Naive thymus-derived CD8-positive, alpha-beta T cell (primary cell): ENCODE measurements at regions of chr10 and their contacts with region 1.

Region 1: GRCh38 chr10:69318106-69318866 is 40.0 kb downstream of the HK1 start:
- DNase-seq: peak; percentile 88 to 94 (median 91)
- ATAC-seq: peak; percentile 87 to 88
- H3K4me3 Mint-ChIP-seq: peak overlapping the region; percentile 93 to 98 (median 96)
- H3K27ac Mint-ChIP-seq: peak overlapping the region; percentile 71 to 95 (median 90)
- H3K4me1 Mint-ChIP-seq: peaks cover 17 to 44% (median 40%) of the 10 kb centered on the region in 4 donors
- H3K27me3 Mint-ChIP-seq: no peaks in the 10 kb centered on the region

Region 2: DNA sequence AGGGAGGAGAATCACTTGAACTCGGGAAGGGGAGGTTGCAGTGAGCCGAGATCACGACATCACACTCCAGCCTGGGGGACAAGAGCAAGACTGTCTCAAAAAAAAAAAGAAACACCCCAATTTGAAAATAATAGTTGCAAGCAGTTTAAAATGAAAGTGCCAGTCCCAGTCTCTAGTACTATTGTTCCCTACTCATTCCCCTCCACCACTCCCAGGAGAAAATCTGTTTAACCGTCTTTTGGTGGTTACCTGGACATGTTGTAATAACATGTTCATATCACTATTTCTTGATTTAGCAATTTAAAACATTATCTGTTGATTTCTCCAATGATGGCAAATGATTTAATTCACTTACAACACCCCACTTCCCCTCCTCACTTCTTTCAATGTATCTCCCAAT is 285.0 kb before region 1 on chr10:
- POLR2A ChIA-PET with region 1: no interaction called
- DNase-seq: no peak
- ATAC-seq: no peak
- H3K4me3 Mint-ChIP-seq: no peak overlapping the region
- H3K27ac Mint-ChIP-seq: no peak overlapping the region
- H3K4me1 Mint-ChIP-seq: no peaks in the 10 kb centered on the region
- H3K27me3 Mint-ChIP-seq: no peaks in the 10 kb centered on the region

Region 3: GRCh38 chr10:69337296-69338132 is 19.2 kb after region 1 on chr10:
- POLR2A ChIA-PET with region 1: interaction called, 17 read pairs
- DNase-seq: no peak
- ATAC-seq: no peak
- H3K4me3 Mint-ChIP-seq: peak overlapping the region in 4 of 10 donors; percentile 4 to 56 (median 14)
- H3K27ac Mint-ChIP-seq: peak overlapping the region in 7 of 10 donors; percentile 15 to 95 (median 29)
- H3K4me1 Mint-ChIP-seq: peaks cover 39 to 85% (median 75%) of the 10 kb centered on the region in 4 donors
- H3K27me3 Mint-ChIP-seq: no peaks in the 10 kb centered on the region

Region 4: DNA sequence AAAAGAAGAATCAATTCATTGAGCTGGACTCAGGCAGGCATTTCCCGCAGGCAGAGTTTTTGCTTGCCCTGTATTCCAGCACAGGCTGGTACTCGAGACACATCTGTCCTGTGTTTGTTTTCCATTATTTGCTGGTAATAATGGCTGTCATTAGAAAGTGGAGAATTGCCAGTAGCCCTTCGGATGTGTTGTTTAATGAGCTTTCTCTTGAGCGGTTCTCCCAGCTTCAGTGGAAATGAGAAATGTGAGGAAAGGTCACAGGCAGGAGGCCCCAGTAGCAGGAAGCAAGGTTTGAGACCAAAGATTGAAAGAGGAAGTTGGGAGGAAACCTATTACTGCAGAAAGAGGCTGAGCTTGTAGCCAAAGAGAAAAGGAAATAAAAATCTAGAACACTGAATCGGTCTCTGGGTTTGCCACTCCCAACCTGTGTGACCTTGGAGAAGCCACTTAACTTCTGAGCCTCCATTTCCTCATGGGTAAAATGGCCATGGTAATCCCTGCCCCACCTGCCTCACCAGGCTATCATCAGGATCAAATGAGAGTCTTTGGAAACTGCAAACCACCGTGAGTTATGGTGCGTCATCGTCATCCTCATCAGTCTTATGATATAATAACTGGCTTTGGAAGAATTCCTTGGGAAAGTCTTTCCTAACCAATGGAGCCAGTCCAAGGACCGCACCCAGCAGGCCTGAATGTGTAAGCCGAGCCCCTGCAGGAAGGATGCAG is 30.7 kb after region 1 on chr10:
- POLR2A ChIA-PET with region 1: interaction called, 37 read pairs
- DNase-seq: peak in 1 of 10 donors; percentile 28
- ATAC-seq: no peak
- H3K4me3 Mint-ChIP-seq: peak overlapping the region; percentile 58 to 83 (median 79)
- H3K27ac Mint-ChIP-seq: peak overlapping the region; percentile 76 to 96 (median 95)
- H3K4me1 Mint-ChIP-seq: peaks cover 36 to 87% (median 80%) of the 10 kb centered on the region in 4 donors
- H3K27me3 Mint-ChIP-seq: no peaks in the 10 kb centered on the region

Region 5: GRCh38 chr10:69360485-69361324 is 42.4 kb after region 1 on chr10:
- POLR2A ChIA-PET with region 1: interaction called, 43 read pairs
- DNase-seq: no peak
- ATAC-seq: no peak
- H3K4me3 Mint-ChIP-seq: peak overlapping the region; percentile 45 to 84 (median 64)
- H3K27ac Mint-ChIP-seq: peak overlapping the region; percentile 75 to 97 (median 92)
- H3K4me1 Mint-ChIP-seq: peaks cover 26 to 79% (median 63%) of the 10 kb centered on the region in 4 donors
- H3K27me3 Mint-ChIP-seq: no peaks in the 10 kb centered on the region

Region 6: DNA sequence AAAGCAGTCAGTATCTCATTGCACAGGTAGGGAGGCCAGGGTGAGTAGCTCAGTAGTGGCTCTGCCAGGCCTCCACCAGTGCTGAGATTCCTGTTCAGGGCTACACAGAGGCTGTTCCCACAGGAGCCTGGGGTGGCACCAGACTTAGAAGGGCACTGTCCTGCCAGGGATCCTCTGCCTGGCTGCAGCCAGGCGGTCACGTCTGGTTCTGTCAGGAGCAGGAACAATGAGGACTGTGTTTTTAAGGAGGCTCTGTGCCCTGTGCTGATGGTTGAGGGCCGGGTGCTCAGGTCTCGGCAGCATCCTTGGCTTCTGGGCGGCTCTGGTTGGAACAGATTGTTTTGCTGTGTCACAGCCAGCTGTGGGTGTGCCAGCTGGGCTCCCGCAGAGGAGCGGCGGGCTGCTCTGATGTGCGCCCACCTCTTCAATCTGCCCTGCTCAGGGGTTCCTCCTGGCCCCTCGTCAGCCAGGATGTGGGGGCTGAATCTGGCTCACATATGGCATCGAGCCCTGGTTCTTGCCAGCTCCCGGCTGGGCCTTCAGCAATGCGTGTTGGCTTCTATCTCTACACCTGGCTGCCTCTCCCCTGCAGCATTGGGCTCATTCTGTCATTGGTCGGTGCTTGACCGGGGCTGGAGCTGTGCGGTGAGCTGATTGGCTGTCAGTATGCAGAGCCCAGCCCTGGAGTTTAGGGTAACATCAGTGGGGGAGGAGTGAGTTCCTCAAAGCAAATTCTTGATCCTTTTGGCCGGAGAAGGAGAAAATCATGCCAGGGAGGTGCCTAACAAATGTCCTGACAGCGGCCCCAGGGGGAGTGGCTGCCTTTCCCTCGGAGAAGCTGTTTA is 57.2 kb after region 1 on chr10:
- POLR2A ChIA-PET with region 1: interaction called, 10 read pairs
- DNase-seq: peak in 2 of 10 donors; percentile 13 to 26
- ATAC-seq: peak; percentile 54 to 63
- H3K4me3 Mint-ChIP-seq: peak overlapping the region in 5 of 10 donors; percentile 9 to 54 (median 33)
- H3K27ac Mint-ChIP-seq: peak overlapping the region; percentile 45 to 94 (median 82)
- H3K4me1 Mint-ChIP-seq: peaks cover 20 to 48% (median 33%) of the 10 kb centered on the region in 4 donors
- H3K27me3 Mint-ChIP-seq: no peaks in the 10 kb centered on the region